PC-9 (cell line): ENCODE measurements at regions of chr6 and their contacts with region 1.

Region 1: DNA sequence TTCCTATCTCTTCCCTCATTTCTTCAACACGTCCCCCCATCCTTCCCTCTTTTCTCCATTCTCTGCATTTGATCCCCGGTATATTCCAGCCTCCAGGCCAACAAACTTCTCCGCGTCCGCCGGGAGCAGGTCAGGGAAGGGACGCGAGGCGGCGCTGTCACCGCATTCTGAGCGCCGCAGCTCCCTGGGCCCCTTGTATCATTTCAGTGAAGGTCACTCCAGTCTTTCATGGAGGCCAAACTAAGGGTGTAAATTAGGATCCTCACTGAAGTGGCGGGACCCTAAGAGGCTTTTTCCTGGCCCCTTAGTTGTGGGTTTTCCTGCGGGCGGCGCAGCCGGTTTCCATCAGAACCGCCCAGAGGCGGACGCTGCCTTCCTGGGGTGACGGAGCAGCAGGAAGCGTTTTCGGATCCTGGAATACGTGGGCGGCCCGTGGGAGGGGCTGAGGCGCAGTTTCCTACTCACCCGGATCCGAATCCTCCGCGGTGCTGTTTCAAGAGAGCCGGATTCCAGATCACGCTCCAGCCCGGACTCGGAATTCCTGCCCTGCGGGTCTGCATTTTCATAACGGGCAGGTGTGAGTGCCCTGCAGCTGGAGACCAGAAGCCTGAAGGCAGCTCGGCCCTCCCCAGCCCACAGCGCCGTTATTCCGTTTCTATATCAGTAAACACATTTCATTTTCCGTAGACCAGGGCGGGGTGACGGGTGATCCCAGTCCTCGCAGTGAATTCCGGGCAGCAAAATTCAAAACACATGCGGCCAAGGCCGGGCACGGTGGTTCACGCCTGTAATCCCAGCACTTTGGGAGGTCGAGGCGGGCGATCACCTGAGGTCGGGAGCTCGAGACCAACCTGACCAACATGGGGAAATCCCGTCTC is 3.6 kb upstream of the MICA start:
- DNase-seq: peak; percentile 65 to 88
- H3K4me3 ChIP-seq: peak overlapping the region; percentile 67
- H3K27ac ChIP-seq: peak overlapping the region; percentile 40; the same call in 1 of the 2 replicates
- H3K4me1 ChIP-seq: peaks cover 10% of the 10 kb centered on the region
- H3K27me3 ChIP-seq: 0 out of 2 replicates have a peak, but pooled peaks cover 15% of the 10 kb centered on the region
- CTCF ChIP-seq: peak; percentile 88

Region 2: GRCh38 chr6:31441365-31442267 is 41.8 kb after region 1 on chr6:
- CTCF ChIA-PET with region 1: interaction called, 9 read pairs
- POLR2A ChIA-PET with region 1: no interaction called
- intact Hi-C with region 1: loop called (anchors 1 kb)
- DNase-seq: peak in 1 of 2 experiments; percentile 74
- H3K4me3 ChIP-seq: no peak overlapping the region
- H3K27ac ChIP-seq: no peak overlapping the region
- H3K4me1 ChIP-seq: no peaks in the 10 kb centered on the region
- H3K27me3 ChIP-seq: peaks cover 17% of the 10 kb centered on the region
- CTCF ChIP-seq: peak; percentile 82

Region 3: DNA sequence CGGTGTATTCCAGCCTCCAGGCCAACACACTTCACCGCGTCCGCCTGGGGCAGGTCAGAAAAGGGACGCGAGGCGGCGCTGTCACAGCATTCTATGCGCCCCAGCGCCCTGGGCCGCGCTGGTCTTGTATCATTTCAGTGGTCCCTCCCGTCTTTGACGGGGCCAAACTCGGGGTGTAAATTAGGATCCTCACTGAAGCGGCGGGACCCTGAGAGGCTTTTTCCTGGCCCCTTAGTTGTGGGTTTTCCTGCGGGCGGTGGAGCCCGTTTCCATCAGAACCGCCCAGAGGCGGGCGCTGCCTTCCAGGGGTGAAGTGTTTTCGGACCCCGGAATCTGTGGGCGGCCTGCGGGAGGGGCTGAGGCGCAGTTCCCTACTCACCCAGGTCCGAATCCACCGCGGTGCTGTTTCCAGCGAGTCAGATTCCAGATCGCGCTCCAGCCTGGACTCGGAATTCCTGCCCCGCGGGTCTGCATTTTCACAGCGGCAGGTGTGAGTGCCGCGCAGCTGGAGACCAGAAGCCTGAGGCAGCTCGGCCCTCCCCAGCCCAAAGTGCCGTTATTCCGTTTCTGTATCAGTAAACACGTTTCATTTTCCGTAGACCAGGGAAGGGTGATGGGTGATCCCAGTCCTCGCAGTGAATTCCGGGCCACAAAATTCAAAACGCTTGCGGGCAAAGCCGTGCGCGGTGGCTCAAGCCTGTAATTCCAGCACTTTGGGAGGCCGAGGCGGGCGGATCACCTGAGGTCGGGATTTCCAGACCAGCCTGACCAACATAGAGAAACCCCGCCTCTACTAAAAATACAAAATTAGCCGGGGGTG is 94.3 kb after region 1 on chr6:
- CTCF ChIA-PET with region 1: interaction called, 5 read pairs
- POLR2A ChIA-PET with region 1: no interaction called
- intact Hi-C with region 1: loop called (anchors 2 kb)
- DNase-seq: peak; percentile 54 to 84
- H3K4me3 ChIP-seq: peak overlapping the region; percentile 67
- H3K27ac ChIP-seq: peak overlapping the region; percentile 47; the same call in 1 of the 2 replicates
- H3K4me1 ChIP-seq: peaks cover 22% of the 10 kb centered on the region
- H3K27me3 ChIP-seq: no peaks in the 10 kb centered on the region
- CTCF ChIP-seq: peak; percentile 87

Region 4: GRCh38 chr6:31541658-31542521 is 142.1 kb after region 1 on chr6 and contains the start of gene DDX39B:
- CTCF ChIA-PET with region 1: no interaction called
- POLR2A ChIA-PET with region 1: interaction called, 4 read pairs
- intact Hi-C with region 1: loop called (anchors 2 kb)
- DNase-seq: peak; percentile 89 to 90
- H3K4me3 ChIP-seq: peak within 1 kb of the TSS; percentile 75
- H3K27ac ChIP-seq: peak within 1 kb of the TSS; percentile 95
- H3K4me1 ChIP-seq: peaks cover 29% of the 10 kb centered on the region
- H3K27me3 ChIP-seq: no peaks in the 10 kb centered on the region
- CTCF ChIP-seq: no peak
- total RNA-seq, gene DDX39B: 383 and 436 TPM in 2 replicates

Region 5: DNA sequence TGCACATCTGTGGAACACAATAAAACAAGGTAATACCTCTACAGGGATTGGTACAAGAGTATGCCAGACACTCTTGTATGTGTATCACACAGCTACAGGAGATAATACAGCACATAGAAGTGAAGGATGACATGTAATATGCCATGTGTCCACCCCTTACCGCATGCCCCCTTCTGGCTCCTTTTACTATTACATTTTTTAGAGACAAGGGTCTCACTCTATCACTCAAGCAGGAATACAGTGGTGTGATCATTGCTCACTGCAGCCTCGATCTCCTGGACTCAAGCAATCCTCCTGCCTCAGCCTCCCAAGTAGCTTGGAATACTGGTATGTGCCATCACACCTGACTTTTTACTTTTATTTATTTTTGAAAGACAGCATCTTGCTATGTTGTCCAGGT is 197.2 kb after region 1 on chr6:
- CTCF ChIA-PET with region 1: interaction called, 5 read pairs
- POLR2A ChIA-PET with region 1: no interaction called
- intact Hi-C with region 1: loop called (anchors 2 kb)
- DNase-seq: no peak
- H3K4me3 ChIP-seq: no peak overlapping the region
- H3K27ac ChIP-seq: no peak overlapping the region
- H3K4me1 ChIP-seq: no peaks in the 10 kb centered on the region
- H3K27me3 ChIP-seq: no peaks in the 10 kb centered on the region
- CTCF ChIP-seq: peak; percentile 53

Region 6: GRCh38 chr6:31922942-31923341 is 523.1 kb after region 1 on chr6:
- CTCF ChIA-PET with region 1: no interaction called
- POLR2A ChIA-PET with region 1: interaction called, 11 read pairs
- intact Hi-C with region 1: no loop called
- DNase-seq: no peak
- H3K4me3 ChIP-seq: no peak overlapping the region
- H3K27ac ChIP-seq: no peak overlapping the region
- H3K4me1 ChIP-seq: peaks cover 5% of the 10 kb centered on the region; the same call in 1 of the 2 replicates
- H3K27me3 ChIP-seq: no peaks in the 10 kb centered on the region
- CTCF ChIP-seq: no peak